ENCODE measurements at regions of chr2 and their contacts with region 1.

Region 1: GRCh38 chr2:119862127-119862889 is 102.6 kb downstream of the PTPN4 start:
- DNase-seq: peak in 1 of 2 donors; percentile 34
- ATAC-seq: peak; percentile 71 to 81 (median 76)
- H3K4me3 ChIP-seq: no peak overlapping the region
- H3K4me3 Mint-ChIP-seq: peak overlapping the region; percentile 45
- H3K27ac ChIP-seq: peak overlapping the region; percentile 38
- H3K27ac Mint-ChIP-seq: peak overlapping the region; percentile 77 to 85
- H3K4me1 ChIP-seq: no peaks in the 10 kb centered on the region
- H3K4me1 Mint-ChIP-seq: peaks cover 60 to 62% of the 10 kb centered on the region in 2 donors
- H3K27me3 ChIP-seq: no peaks in the 10 kb centered on the region
- H3K27me3 Mint-ChIP-seq: no peaks in the 10 kb centered on the region
- CTCF ChIP-seq: no peak

Region 2: GRCh38 chr2:119929537-119929936 is 67.2 kb after region 1 on chr2:
- intact Hi-C with region 1: loop called (anchors 5 kb)
- DNase-seq: peak in 1 of 2 donors; percentile 73
- ATAC-seq: peak; percentile 74 to 86 (median 86)
- H3K4me3 ChIP-seq: peak overlapping the region; percentile 72
- H3K4me3 Mint-ChIP-seq: peak overlapping the region; percentile 86
- H3K27ac ChIP-seq: peak overlapping the region; percentile 76
- H3K27ac Mint-ChIP-seq: peak overlapping the region; percentile 83 to 97
- H3K4me1 ChIP-seq: peaks cover 9% of the 10 kb centered on the region
- H3K4me1 Mint-ChIP-seq: peaks cover 47 to 56% of the 10 kb centered on the region in 2 donors
- H3K27me3 ChIP-seq: no peaks in the 10 kb centered on the region
- H3K27me3 Mint-ChIP-seq: no peaks in the 10 kb centered on the region
- CTCF ChIP-seq: no peak

Measured in natural killer cell (primary cell).